ENCODE measurements at regions of chr18 and their contacts with region 1.

Region 1: DNA sequence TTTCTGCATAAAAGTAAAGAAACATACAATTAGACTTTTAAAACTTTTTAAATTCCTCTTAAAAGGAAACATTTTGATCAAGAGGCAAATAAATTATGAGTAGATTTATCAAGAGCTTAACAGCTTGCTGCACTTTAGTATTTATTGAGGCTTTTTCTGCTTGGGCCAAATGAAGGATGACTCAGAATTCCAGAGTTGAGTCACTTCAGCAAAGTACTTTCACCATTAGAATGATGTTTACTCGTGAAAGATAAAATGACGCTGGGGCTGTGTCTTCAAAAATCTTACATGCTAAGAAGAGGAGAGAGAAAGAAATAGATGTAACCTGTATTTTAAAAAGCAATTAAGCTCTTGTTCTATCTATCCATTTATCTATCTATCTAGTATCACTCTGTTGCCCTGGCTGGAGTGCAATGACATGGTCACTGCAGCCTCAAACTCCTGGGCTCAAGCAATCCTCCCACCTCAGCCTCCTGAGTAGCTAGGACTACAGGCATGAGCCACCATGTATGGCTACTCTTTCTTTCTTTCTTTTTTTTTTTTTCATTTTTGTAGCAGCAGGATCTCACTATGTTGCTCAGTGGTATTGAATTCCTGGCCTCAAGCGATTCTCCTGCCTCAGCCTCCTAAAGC is 75.3 kb upstream of the RIOK3 start:
- DNase-seq: no peak
- ATAC-seq: no peak
- H3K4me3 Mint-ChIP-seq: no peak overlapping the region
- H3K27ac Mint-ChIP-seq: no peak overlapping the region
- H3K4me1 Mint-ChIP-seq: peaks cover 10% of the 10 kb centered on the region
- H3K27me3 Mint-ChIP-seq: no peaks in the 10 kb centered on the region
- CTCF ChIP-seq: no peak

Region 2: GRCh38 chr18:23032030-23032582 is 345.7 kb before region 1 on chr18:
- CTCF ChIA-PET with region 1: interaction called, 17 read pairs
- POLR2A ChIA-PET with region 1: no interaction called
- DNase-seq: no peak
- ATAC-seq: no peak
- H3K4me3 Mint-ChIP-seq: no peak overlapping the region
- H3K27ac Mint-ChIP-seq: no peak overlapping the region
- H3K4me1 Mint-ChIP-seq: peaks cover 13% of the 10 kb centered on the region
- H3K27me3 Mint-ChIP-seq: no peaks in the 10 kb centered on the region
- CTCF ChIP-seq: no peak

Region 3: DNA sequence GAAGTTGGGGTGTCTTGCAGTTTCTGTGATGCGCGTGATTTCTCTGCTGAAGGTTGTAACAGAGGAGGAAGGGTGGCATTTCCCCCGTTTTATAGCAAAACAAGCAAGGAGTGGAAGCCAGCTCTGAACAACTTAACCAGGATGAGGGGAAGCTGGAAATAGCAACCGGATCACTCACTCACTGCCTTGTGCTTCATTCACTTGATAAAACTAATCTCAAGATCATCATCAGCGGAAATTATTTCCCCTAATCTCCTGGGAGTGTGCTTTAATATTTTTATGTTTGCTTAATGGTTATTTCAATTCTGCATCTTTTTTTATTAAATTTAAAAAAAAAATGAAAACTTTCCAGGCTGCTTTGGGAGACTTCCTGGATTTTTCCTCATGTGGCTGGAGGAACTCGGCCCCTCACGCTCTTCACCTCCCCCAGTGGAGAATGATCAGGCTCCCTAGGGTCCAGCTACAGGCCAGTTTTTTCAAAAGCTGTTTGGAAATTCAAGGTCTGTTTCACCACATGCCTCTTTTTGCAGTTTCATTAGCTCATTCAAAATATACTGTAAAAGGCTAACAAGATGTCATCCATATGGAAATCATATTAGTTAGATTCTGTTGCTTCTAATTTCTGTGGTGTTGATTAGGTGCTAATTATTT is 210.8 kb before region 1 on chr18:
- CTCF ChIA-PET with region 1: no interaction called
- POLR2A ChIA-PET with region 1: no interaction called
- DNase-seq: no peak
- ATAC-seq: no peak
- H3K4me3 Mint-ChIP-seq: 0 out of 2 replicates have a peak overlapping the region, but pooled peaks have one; percentile 2
- H3K27ac Mint-ChIP-seq: peak overlapping the region; percentile 94
- H3K4me1 Mint-ChIP-seq: peaks cover 84% of the 10 kb centered on the region
- H3K27me3 Mint-ChIP-seq: no peaks in the 10 kb centered on the region
- CTCF ChIP-seq: no peak

Region 4: GRCh38 chr18:23307567-23308295 is 70.1 kb before region 1 on chr18:
- CTCF ChIA-PET with region 1: interaction called, 13 read pairs
- POLR2A ChIA-PET with region 1: no interaction called
- DNase-seq: no peak
- ATAC-seq: no peak
- H3K4me3 Mint-ChIP-seq: no peak overlapping the region
- H3K27ac Mint-ChIP-seq: no peak overlapping the region
- H3K4me1 Mint-ChIP-seq: peaks cover 12% of the 10 kb centered on the region
- H3K27me3 Mint-ChIP-seq: no peaks in the 10 kb centered on the region
- CTCF ChIP-seq: no peak

Region 5: GRCh38 chr18:23398401-23398800 is 20.6 kb after region 1 on chr18:
- CTCF ChIA-PET with region 1: interaction called, 10 read pairs
- POLR2A ChIA-PET with region 1: no interaction called
- DNase-seq: no peak
- ATAC-seq: no peak
- H3K4me3 Mint-ChIP-seq: no peak overlapping the region
- H3K27ac Mint-ChIP-seq: no peak overlapping the region
- H3K4me1 Mint-ChIP-seq: peaks cover 23% of the 10 kb centered on the region
- H3K27me3 Mint-ChIP-seq: no peaks in the 10 kb centered on the region
- CTCF ChIP-seq: no peak

Region 6: DNA sequence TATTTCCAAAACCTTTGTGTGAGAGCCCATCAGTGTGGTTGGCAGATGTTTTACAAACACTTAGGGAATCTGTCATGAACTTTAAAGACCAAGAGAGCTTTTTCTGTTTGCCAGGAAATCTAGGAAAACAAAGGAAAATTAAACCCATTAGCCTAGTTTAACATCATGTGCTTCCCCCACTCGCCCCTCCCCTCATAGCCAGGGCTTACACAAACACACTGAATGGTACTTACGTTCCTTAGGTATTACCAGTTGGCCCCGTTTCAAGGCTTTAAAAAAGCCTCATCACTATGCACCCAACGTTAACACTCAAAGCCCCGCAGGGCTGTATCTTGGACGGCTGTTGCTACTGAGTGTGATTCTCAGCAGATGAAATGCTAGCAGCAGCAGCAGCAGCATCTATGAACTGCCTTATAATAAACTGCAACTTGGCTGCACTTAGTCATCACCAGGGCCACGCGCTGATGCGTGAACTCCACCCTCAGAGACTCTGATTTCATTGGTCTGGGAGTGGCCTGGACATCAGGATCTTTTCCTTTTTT is 616.6 kb after region 1 on chr18:
- CTCF ChIA-PET with region 1: no interaction called
- POLR2A ChIA-PET with region 1: no interaction called
- DNase-seq: no peak
- ATAC-seq: peak; percentile 68
- H3K4me3 Mint-ChIP-seq: no peak overlapping the region
- H3K27ac Mint-ChIP-seq: no peak overlapping the region
- H3K4me1 Mint-ChIP-seq: peaks cover 17% of the 10 kb centered on the region
- H3K27me3 Mint-ChIP-seq: no peaks in the 10 kb centered on the region
- CTCF ChIP-seq: no peak